ENCODE measurements at regions of chr12 and their contacts with region 1.

Region 1: GRCh38 chr12:113048716-113049127 is 7.8 kb upstream of the DTX1 start:
- DNase-seq: peak; percentile 78
- ATAC-seq: peak; percentile 88
- H3K4me3 Mint-ChIP-seq: no peak overlapping the region
- H3K27ac Mint-ChIP-seq: no peak overlapping the region
- H3K4me1 Mint-ChIP-seq: peaks cover 21% of the 10 kb centered on the region
- H3K27me3 Mint-ChIP-seq: no peaks in the 10 kb centered on the region

Region 2: DNA sequence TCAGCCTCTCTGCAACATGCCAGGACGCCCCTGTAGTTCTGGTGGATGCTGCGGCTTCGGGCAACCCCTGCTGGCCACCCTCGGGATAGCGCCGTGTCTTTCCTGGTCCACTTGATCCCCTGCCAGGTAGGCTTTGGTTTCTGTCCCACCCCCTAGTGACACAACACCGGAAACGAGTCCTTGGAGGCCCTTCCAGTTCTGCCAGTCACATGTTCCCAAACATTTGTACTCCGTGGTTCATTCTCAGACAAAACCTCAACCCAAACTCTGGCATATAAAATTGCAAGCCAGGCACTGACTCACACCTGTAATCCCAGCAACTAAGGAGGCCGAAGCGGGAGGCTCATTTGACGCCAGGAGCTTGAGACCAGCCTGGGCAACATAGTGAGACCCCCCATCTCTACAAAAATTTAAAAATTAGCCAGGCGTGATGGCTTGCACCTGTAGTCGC is 49.7 kb after region 1 on chr12:
- CTCF ChIA-PET with region 1: interaction called, 30 read pairs
- POLR2A ChIA-PET with region 1: no interaction called
- intact Hi-C with region 1: loop called (anchors 1 kb)
- DNase-seq: peak; percentile 88
- ATAC-seq: peak; percentile 89
- H3K4me3 Mint-ChIP-seq: no peak overlapping the region
- H3K27ac Mint-ChIP-seq: peak overlapping the region; percentile 70
- H3K4me1 Mint-ChIP-seq: peaks cover 21% of the 10 kb centered on the region
- H3K27me3 Mint-ChIP-seq: no peaks in the 10 kb centered on the region

Region 3: DNA sequence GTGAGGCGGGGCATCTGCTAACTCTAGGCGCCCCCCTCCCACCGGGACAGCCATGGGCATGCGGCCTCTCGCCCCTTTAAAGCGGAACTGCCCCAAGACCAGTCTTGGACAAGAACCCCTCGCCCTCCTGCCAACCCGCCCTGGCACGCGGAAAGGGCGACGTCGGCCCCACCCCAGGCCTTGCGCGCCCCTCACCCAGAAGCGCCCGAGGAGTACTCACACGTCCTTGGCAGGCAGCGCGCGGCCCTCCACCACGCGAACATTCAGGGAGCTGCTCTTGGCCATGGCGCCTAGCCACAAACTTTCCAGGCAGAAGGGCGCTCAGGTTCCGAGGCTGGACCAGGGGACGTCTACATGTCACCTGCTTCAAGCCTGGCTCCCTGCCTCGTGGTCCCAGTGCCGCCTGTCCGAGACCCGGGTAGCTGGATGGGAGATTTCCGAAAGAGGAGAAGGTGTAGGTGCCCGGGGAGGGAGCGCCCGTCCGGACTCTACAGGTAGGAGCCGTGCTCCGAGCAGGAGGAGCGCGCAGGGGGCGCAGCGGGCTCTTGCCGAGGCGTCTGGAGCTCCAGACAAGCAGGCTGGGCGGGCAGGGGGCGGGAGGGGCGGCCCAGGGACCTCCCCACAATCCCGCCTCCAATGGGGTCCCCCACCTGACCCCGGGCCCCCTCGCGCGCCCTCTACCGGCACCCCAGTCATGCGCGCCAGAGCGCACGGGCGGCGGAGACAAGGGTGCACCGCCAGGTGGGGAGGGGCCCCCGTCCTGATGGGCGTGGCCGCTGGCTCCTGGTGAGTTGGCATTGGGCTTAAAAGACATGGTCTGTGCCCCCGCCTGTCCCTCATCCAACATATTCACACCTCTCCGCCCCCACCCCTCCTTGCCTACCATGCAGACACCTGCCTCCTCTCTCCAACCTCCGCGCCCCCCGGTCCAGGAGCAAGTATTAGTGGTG is 86.7 kb after region 1 on chr12 and contains the start of gene RASAL1:
- CTCF ChIA-PET with region 1: interaction called, 3 read pairs
- POLR2A ChIA-PET with region 1: no interaction called
- intact Hi-C with region 1: loop called in 1 of 2 experiments (anchors 1 kb)
- DNase-seq: peak; percentile 96
- ATAC-seq: peak; percentile 92
- H3K4me3 Mint-ChIP-seq: peak within 1 kb of the TSS; percentile 73
- H3K27ac Mint-ChIP-seq: peak within 1 kb of the TSS; percentile 92
- H3K4me1 Mint-ChIP-seq: peaks cover 16% of the 10 kb centered on the region
- H3K27me3 Mint-ChIP-seq: no peaks in the 10 kb centered on the region
- total RNA-seq, gene RASAL1: 9.0 to 10.6 TPM

Region 4: GRCh38 chr12:113174461-113175384 is 126.0 kb after region 1 on chr12:
- CTCF ChIA-PET with region 1: interaction called, 13 read pairs
- POLR2A ChIA-PET with region 1: interaction called, 5 read pairs
- intact Hi-C with region 1: loop called (anchors 1 kb)
- DNase-seq: peak; percentile 88
- ATAC-seq: peak; percentile 75
- H3K4me3 Mint-ChIP-seq: no peak overlapping the region
- H3K27ac Mint-ChIP-seq: no peak overlapping the region
- H3K4me1 Mint-ChIP-seq: peaks cover 2% of the 10 kb centered on the region
- H3K27me3 Mint-ChIP-seq: no peaks in the 10 kb centered on the region

Region 5: DNA sequence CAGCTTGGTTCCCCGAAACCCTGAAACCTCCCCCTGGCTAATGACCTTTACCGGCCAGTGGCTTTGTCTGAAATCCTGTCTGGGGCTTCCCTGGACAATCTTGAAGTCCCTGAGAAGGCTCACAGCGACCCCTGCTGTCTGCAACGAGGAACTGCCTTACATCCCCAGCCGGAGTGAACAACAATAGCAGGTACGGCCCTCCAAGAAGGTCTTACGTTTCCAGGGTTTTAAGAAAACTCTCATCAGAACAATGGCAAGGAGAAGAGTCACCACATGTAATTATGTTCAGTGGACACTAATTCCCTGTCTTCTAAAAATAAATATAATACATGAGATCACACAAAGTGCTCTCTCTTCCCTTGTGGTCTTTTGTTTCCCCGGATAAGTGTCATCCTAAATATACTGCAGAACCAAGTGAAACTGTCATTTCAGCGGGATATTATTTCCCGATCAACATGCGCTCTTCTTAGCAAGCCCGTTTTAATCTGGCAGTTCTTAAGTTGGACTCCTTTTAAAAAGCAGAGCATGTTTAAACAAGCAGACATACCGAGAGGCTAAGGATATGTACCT is 864.1 kb after region 1 on chr12:
- CTCF ChIA-PET with region 1: no interaction called
- POLR2A ChIA-PET with region 1: no interaction called
- intact Hi-C with region 1: loop called in 1 of 2 experiments (anchors 10 kb)
- DNase-seq: peak; percentile 72
- ATAC-seq: peak; percentile 36
- H3K4me3 Mint-ChIP-seq: no peak overlapping the region
- H3K27ac Mint-ChIP-seq: no peak overlapping the region
- H3K4me1 Mint-ChIP-seq: no peaks in the 10 kb centered on the region
- H3K27me3 Mint-ChIP-seq: no peaks in the 10 kb centered on the region